WTC11 (cell line): ENCODE measurements at regions of chr16 and their contacts with region 1.

Region 1: DNA sequence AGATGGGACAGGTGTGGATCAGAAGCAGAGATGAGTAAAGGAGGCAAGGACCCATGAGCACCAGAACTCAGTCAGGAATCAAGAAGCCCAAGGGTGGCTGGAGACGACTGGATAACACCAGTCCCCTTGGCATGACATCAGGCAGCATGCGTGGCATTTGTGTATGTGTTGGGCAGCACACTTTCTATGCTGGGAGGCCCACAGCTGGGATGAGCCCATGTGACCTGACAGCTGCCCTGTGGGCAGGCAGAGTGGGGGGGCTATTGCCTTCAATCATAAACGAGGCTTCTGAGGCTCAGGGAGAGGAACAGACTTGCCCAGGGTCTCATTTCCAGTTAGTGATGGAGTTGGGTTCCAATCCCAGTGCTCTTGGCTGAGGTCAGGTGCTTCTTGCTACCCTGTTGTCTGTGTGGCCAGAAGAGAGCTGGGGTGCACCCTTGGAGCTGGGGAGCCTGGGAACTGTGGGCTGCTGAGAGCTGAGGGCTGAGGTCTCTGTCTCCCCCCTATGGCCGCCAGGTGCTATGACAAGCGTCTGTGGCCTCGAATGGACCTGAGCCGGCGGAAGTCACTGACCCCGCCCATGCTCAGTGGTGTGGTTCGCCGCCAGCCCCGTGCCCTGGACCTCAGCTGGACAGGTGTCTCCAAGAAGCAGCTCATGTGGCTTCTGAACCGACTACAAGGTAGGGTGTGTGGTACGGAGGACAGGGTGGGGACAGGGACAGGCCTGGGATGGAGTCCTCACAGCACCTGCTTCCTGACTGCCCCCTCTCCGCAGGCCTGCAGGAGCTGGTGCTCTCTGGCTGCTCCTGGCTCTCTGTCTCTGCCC is 7.1 kb upstream of the ORAI3 start:
- DNase-seq: peak; percentile 82
- ATAC-seq: peak; percentile 97
- H3K4me3 Mint-ChIP-seq: no peak overlapping the region
- H3K27ac Mint-ChIP-seq: no peak overlapping the region
- H3K4me1 Mint-ChIP-seq: peaks cover 13% of the 10 kb centered on the region
- H3K27me3 Mint-ChIP-seq: no peaks in the 10 kb centered on the region
- CTCF ChIP-seq: peak; percentile 81

Region 2: GRCh38 chr16:30922960-30923535 is 18.8 kb before region 1 on chr16:
- CTCF ChIA-PET with region 1: interaction called, 79 read pairs
- POLR2A ChIA-PET with region 1: interaction called, 4 read pairs
- DNase-seq: peak; percentile 99
- ATAC-seq: peak; percentile 60
- H3K4me3 Mint-ChIP-seq: peak overlapping the region; percentile 99
- H3K27ac Mint-ChIP-seq: peak overlapping the region; percentile 100
- H3K4me1 Mint-ChIP-seq: peaks cover 20% of the 10 kb centered on the region
- H3K27me3 Mint-ChIP-seq: no peaks in the 10 kb centered on the region; the same call in 1 of the 2 replicates
- CTCF ChIP-seq: no peak